ENCODE measurements at regions of chr7 and their contacts with region 1.

Region 1: DNA sequence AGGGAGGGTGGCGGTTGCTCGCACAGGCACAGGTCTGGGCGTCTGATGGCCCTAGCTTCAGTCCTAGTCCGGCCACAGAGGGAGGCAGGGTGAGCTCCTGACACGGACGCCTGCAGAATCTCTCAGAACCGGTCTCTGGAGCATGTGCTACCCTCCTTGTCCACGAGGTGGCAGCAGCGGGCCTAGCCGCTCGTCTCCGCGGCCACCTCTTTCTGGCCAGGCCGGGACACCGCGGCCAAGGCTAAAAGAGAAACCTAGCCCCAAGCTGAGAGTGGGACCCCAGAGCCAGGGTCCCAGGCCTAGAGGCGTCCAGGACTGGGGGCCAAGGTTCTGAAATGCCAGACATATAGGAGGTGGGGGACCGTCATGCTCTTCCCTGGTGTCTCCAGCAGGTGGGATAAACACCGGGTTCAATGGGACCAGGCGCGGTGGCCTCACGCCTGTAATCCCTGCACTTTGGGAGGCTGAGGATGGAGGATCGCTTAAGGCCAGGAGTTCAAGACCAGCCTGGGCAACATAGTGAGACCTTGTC is 3.2 kb upstream of the LAT2 start:
- DNase-seq: peak; percentile 81 to 94 (median 86)
- H3K4me3 ChIP-seq: peak overlapping the region in 1 of 3 donors; percentile 41
- H3K27ac ChIP-seq: no peak overlapping the region
- H3K4me1 ChIP-seq: peaks cover 0 to 2% (median 0%) of the 10 kb centered on the region in 3 donors
- H3K27me3 ChIP-seq: no peaks in the 10 kb centered on the region
- CTCF ChIP-seq: peak; percentile 95

Region 2: DNA sequence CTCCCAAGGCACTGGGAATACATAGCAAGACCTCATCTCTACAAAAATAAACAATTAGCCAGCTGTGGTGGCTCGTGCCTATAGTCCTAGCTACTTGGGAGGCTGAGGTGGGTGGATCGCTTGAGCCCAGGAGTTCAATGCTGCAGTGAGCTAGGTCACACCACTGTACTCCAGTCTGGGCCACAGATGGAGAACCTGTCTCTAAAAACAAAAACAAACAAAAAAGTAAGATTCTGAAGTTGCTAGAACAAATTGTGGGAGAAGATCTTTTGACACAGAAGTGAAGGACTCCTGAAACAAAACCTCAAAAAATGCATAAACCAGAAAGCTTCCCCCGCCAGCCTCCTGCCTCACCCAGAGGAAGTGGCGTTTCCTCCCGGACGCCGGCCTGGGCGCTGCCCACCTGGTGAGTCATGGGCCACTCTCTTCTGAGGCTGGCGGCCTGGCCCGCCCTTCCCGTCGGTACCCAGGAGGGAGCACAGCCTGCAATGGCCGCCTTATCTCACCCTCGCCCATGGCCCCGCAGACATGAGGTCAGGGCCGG is 204.1 kb before region 1 on chr7:
- intact Hi-C with region 1: no loop called
- DNase-seq: peak in 2 of 5 donors; percentile 36 to 90
- H3K4me3 ChIP-seq: no peak overlapping the region
- H3K27ac ChIP-seq: peak overlapping the region; percentile 22 to 37
- H3K4me1 ChIP-seq: no peaks in the 10 kb centered on the region
- H3K27me3 ChIP-seq: no peaks in the 10 kb centered on the region
- CTCF ChIP-seq: no peak

Region 3: DNA sequence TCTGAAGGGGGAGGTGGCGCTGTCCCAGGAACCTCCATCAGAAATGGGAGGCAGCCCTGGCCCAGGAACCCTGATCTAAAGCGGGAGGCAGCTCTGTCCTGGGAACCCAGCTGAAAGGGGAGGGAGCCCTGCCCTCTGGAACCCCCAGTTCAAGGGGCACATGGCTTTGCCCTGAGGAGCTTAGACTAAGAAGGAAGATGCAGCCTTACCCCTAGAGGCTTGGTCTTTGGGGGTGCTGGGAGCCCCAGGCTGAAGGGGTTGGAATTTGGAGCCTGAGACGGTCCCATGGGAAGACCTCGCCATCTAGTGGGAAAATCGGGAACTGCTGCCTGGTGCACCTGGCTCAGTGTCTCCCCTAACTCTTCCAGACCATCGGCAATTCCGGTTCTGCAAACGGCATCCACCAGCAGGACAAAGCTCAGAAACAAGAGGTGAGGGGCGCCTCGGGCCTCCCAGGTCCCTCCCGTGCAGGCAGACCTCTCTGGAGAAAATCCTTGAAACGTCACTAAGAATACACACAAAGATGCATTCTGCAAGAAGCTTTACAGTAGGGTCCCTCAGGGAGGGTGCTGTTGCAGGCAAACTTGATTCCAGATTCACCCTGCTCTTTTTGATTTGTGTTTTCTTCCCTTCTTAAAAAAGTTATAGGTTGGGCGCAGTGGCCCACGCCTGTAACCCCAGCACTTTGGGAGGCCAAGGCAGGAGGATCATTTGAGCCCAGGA is 194.6 kb after region 1 on chr7:
- intact Hi-C with region 1: loop called (anchors 5 kb)
- DNase-seq: peak; percentile 75 to 79 (median 76)
- H3K4me3 ChIP-seq: no peak overlapping the region
- H3K27ac ChIP-seq: no peak overlapping the region
- H3K4me1 ChIP-seq: no peaks in the 10 kb centered on the region
- H3K27me3 ChIP-seq: no peaks in the 10 kb centered on the region
- CTCF ChIP-seq: peak; percentile 98